Activated naive CD4-positive, alpha-beta T cell treated with anti-CD3 and anti-CD28 coated beads for 36 hours (primary cell): ENCODE measurements at regions of chr3 and their contacts with region 1.

Region 1: GRCh38 chr3:136075218-136075808 is 109.8 kb downstream of the PPP2R3A start:
- DNase-seq: peak; percentile 87
- H3K4me3 Mint-ChIP-seq: no peak overlapping the region
- H3K27ac Mint-ChIP-seq: no peak overlapping the region
- H3K4me1 Mint-ChIP-seq: peaks cover 4% of the 10 kb centered on the region
- H3K27me3 Mint-ChIP-seq: peaks cover 4% of the 10 kb centered on the region

Region 2: GRCh38 chr3:136250226-136250902 is 175.1 kb after region 1 on chr3 and contains the start of gene PCCB:
- CTCF ChIA-PET with region 1: interaction called, 4 read pairs
- intact Hi-C with region 1: loop called (anchors 1 kb)
- DNase-seq: peak; percentile 95
- H3K4me3 Mint-ChIP-seq: peak within 1 kb of the TSS; percentile 83
- H3K27ac Mint-ChIP-seq: peak within 1 kb of the TSS; percentile 90
- H3K4me1 Mint-ChIP-seq: peaks cover 18% of the 10 kb centered on the region
- H3K27me3 Mint-ChIP-seq: no peaks in the 10 kb centered on the region
- total RNA-seq, gene PCCB: 86.0 to 87.6 TPM

Region 3: DNA sequence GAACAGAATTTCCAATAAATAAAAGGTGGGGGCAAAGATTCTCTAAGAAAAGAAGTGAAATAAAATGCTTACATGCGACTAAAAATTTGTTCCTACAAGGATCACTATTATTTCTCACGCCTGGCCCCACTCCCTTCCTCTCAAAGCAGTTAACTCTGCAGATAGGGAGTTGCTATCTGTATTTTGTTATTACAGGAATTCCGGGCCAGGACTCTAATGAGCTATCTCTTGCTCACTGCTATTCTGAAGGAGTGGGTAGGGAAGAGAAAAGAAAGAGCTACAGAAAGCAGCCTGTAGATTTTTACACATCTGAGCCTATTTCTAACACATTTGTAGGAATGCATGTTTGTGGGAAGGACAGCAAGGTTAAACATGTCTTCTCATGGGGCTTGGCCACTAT is 315.3 kb after region 1 on chr3:
- CTCF ChIA-PET with region 1: interaction called, 7 read pairs
- intact Hi-C with region 1: loop called (anchors 1 kb)
- DNase-seq: no peak
- H3K4me3 Mint-ChIP-seq: no peak overlapping the region
- H3K27ac Mint-ChIP-seq: no peak overlapping the region
- H3K4me1 Mint-ChIP-seq: no peaks in the 10 kb centered on the region
- H3K27me3 Mint-ChIP-seq: no peaks in the 10 kb centered on the region

Region 4: GRCh38 chr3:136787349-136787748 is 712.0 kb after region 1 on chr3:
- CTCF ChIA-PET with region 1: no interaction called
- intact Hi-C with region 1: no loop called
- DNase-seq: peak; percentile 43
- H3K4me3 Mint-ChIP-seq: no peak overlapping the region
- H3K27ac Mint-ChIP-seq: no peak overlapping the region
- H3K4me1 Mint-ChIP-seq: peaks cover 15% of the 10 kb centered on the region
- H3K27me3 Mint-ChIP-seq: no peaks in the 10 kb centered on the region

Region 5: DNA sequence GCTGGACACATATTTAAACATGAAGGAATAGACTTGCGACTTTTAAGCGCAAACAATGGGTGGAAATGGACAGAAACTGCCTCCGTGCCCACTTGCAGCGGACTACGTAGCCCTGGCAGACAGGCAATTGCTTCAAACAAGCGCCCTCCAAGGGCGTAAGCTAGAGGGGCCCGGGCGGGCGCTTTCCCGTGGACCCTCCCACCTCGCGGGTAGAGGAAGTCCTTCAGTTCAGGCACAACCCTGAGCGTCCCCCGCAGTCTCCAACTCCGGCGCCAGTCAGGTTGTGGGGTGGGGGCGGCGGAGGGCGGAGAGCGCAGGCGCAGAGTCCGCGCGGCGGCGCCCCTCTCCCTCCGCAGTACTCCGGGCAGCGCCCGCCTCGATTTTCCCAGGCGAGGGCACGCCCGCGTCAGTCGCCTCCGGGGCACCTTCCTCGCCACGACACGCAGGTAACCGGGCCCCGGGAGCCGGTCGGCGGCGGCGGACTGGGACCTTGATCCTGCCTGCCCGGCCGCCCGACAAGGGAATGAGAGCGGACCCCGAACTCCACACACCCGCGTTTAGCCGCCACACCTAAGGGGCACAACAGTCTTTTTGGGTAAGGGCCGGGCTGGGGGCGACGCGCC is 743.6 kb after region 1 on chr3 and contains the start of gene SLC35G2:
- CTCF ChIA-PET with region 1: interaction called, 3 read pairs
- intact Hi-C with region 1: loop called (anchors 5 kb)
- DNase-seq: peak; percentile 38
- H3K4me3 Mint-ChIP-seq: peak within 1 kb of the TSS; percentile 69
- H3K27ac Mint-ChIP-seq: no peak within 1 kb of the TSS
- H3K4me1 Mint-ChIP-seq: peaks cover 19% of the 10 kb centered on the region
- H3K27me3 Mint-ChIP-seq: peaks cover 39% of the 10 kb centered on the region
- total RNA-seq, gene SLC35G2: 0.31 TPM in 1 of 2 experiments, not detected in the other

Region 6: GRCh38 chr3:137013955-137014688 is 938.8 kb after region 1 on chr3:
- CTCF ChIA-PET with region 1: interaction called, 7 read pairs
- intact Hi-C with region 1: loop called (anchors 1 kb)
- DNase-seq: peak; percentile 89
- H3K4me3 Mint-ChIP-seq: peak overlapping the region; percentile 70
- H3K27ac Mint-ChIP-seq: no peak overlapping the region
- H3K4me1 Mint-ChIP-seq: peaks cover 6% of the 10 kb centered on the region
- H3K27me3 Mint-ChIP-seq: no peaks in the 10 kb centered on the region

Region 7: GRCh38 chr3:137946345-137946973 is 1871.1 kb after region 1 on chr3:
- CTCF ChIA-PET with region 1: no interaction called
- intact Hi-C with region 1: loop called (anchors 10 kb)
- DNase-seq: peak; percentile 51
- H3K4me3 Mint-ChIP-seq: no peak overlapping the region
- H3K27ac Mint-ChIP-seq: no peak overlapping the region
- H3K4me1 Mint-ChIP-seq: peaks cover 3% of the 10 kb centered on the region
- H3K27me3 Mint-ChIP-seq: no peaks in the 10 kb centered on the region